Mammary epithelial cell (primary cell): ENCODE measurements at regions of chr18 and their contacts with region 1.

Region 1: DNA sequence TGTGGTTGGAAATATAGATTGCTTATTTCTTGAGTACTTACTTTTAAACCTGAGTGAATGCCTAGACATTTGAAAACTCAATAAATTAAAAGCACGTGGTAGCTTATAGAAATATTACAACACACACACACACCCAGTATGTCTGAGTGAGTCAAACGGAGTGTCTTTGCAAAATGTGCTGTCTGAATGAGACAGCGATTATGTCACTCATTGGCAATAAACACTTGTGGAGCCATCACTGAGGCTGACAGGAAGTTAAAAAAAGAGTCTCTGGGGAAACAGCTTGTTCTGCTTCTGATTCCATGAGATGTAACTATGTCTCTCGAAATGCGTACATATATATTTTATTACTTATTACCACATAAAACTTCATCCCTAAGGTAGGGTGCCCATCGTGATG is 22.3 kb upstream of the VPS4B start:
- DNase-seq: peak; percentile 96
- H3K4me3 ChIP-seq: no peak overlapping the region
- H3K27ac ChIP-seq: peak overlapping the region; percentile 99
- H3K4me1 ChIP-seq: peaks cover 46% of the 10 kb centered on the region
- H3K27me3 ChIP-seq: no peaks in the 10 kb centered on the region
- CTCF ChIP-seq: no peak

Region 2: DNA sequence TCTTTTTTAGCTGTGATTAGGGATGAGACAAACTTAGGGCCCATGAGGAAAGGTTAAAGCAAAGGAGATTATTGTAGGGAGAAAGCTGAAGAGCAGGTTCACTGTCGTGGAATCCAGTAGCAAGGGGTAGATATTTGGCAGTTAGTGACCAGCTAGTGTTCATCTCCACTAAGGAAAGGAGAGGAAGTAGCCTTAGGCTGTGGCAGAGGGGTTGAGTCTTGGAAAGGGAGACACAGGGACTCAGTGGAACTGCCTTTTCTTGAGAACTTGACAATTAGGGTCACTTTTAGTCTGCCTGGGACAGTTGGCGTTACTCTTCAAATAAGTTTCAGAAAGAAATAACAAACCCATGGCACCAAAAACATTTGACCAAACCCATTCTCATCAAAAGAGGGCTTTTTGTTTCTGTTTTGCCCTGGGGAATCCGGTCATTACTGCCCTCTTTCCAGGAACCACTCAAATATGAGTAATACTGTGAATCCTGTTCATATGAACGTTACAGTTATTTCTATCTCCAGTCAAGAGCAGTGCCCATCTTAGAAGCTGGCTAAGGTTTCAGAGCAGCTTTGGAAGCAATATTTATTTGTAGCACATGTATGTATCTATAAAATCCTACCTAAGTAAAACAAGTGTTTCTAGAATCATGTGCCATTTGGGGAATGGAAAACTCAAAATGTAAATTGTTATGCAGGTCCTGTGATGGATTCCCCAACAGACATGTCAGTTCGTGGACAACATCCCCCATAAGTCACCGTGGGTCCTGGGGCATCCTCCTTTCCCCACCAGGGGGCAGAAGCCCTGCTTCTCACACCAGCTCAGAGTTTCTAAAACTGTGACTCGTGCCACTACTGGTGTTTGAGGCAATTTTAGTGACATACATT is 806.5 kb before region 1 on chr18:
- CTCF ChIA-PET with region 1: no interaction called
- dilution Hi-C with region 1: no loop called
- in situ Hi-C with region 1: no loop called
- intact Hi-C with region 1: loop called (anchors 10 kb)
- DNase-seq: peak; percentile 9
- H3K4me3 ChIP-seq: no peak overlapping the region
- H3K27ac ChIP-seq: no peak overlapping the region
- H3K4me1 ChIP-seq: peaks cover 18% of the 10 kb centered on the region
- H3K27me3 ChIP-seq: no peaks in the 10 kb centered on the region
- CTCF ChIP-seq: peak; percentile 67 to 70

Region 3: GRCh38 chr18:63119647-63120046 is 324.9 kb before region 1 on chr18:
- CTCF ChIA-PET with region 1: no interaction called
- dilution Hi-C with region 1: no loop called
- in situ Hi-C with region 1: no loop called
- intact Hi-C with region 1: loop called (anchors 5 kb)
- DNase-seq: no peak
- H3K4me3 ChIP-seq: no peak overlapping the region
- H3K27ac ChIP-seq: no peak overlapping the region
- H3K4me1 ChIP-seq: no peaks in the 10 kb centered on the region
- H3K27me3 ChIP-seq: no peaks in the 10 kb centered on the region
- CTCF ChIP-seq: peak; percentile 22 to 51

Region 4: DNA sequence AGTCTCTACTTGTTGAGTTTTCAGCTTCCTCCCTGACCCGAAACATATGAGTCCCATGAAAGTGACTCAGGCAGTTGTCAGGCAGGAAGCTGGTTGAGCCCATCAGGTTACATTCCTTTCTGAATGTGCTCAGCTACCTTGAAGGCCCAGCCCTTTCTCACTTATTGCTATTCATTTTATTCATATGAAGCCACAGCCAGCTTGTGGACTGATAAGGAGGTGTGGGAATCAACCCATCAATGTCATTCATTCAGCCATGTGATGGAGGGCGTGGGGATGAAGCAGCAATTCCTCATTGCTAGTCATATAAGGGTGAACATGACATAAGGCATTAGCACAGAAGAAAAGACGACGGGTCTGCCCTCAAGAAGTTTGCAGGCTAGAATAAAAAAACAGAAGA is 17.0 kb before region 1 on chr18:
- CTCF ChIA-PET with region 1: interaction called, 5 read pairs
- dilution Hi-C with region 1: no loop called
- in situ Hi-C with region 1: no loop called
- intact Hi-C with region 1: loop called (anchors 1 kb)
- DNase-seq: peak; percentile 100
- H3K4me3 ChIP-seq: no peak overlapping the region
- H3K27ac ChIP-seq: peak overlapping the region; percentile 96
- H3K4me1 ChIP-seq: peaks cover 26% of the 10 kb centered on the region
- H3K27me3 ChIP-seq: no peaks in the 10 kb centered on the region
- CTCF ChIP-seq: no peak